Naive thymus-derived CD8-positive, alpha-beta T cell (primary cell): ENCODE measurements at regions of chr13 and their contacts with region 1.

Region 1: DNA sequence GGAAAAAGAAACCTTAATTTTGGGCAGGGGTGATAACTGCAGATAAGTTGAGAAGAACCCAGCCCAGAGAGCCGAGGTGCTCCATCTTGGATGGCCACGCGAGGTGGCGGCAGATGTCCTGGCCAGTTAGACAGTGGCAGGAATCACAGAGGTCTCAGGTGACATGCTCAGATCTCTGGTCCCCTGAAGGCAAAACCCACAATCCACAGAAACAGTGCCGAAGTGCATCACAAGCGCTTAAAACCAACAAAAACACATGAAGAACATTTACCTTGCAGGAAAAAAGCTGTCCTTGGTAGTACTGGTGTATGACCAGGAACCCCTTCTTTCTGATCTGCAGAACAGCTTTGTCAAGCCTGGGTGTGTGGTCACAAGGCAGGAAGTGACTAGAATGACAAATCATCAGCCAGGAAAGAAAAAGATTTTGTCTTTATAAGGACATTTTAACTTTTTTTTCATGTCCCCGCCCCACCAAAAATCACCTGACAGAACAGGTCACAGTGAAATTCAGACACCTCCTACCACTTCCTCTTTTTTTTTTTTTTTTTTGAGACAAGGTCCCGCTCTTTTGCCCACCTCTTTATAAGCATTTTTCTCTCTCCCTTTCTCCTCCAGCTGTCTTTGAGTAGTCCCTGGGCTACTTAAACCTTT is at the start of gene LCP1:
- DNase-seq: peak; percentile 41 to 93 (median 86)
- ATAC-seq: peak; percentile 81
- H3K4me3 Mint-ChIP-seq: peak within 1 kb of the TSS; percentile 75 to 97 (median 95)
- H3K27ac Mint-ChIP-seq: peak within 1 kb of the TSS; percentile 86 to 97 (median 95)
- H3K4me1 Mint-ChIP-seq: peaks cover 35 to 67% (median 57%) of the 10 kb centered on the region in 4 donors
- H3K27me3 Mint-ChIP-seq: no peaks in the 10 kb centered on the region
- polyA plus RNA-seq, gene LCP1: 834 to 1,034 (median 852) TPM

Region 2: GRCh38 chr13:45989607-45990006 is 192.4 kb before region 1 on chr13:
- POLR2A ChIA-PET with region 1: no interaction called
- DNase-seq: no peak
- ATAC-seq: no peak
- H3K4me3 Mint-ChIP-seq: no peak overlapping the region
- H3K27ac Mint-ChIP-seq: peak overlapping the region in 3 of 10 donors; percentile 6 to 48 (median 16)
- H3K4me1 Mint-ChIP-seq: peaks cover 0 to 16% (median 12%) of the 10 kb centered on the region in 4 donors
- H3K27me3 Mint-ChIP-seq: no peaks in the 10 kb centered on the region

Region 3: DNA sequence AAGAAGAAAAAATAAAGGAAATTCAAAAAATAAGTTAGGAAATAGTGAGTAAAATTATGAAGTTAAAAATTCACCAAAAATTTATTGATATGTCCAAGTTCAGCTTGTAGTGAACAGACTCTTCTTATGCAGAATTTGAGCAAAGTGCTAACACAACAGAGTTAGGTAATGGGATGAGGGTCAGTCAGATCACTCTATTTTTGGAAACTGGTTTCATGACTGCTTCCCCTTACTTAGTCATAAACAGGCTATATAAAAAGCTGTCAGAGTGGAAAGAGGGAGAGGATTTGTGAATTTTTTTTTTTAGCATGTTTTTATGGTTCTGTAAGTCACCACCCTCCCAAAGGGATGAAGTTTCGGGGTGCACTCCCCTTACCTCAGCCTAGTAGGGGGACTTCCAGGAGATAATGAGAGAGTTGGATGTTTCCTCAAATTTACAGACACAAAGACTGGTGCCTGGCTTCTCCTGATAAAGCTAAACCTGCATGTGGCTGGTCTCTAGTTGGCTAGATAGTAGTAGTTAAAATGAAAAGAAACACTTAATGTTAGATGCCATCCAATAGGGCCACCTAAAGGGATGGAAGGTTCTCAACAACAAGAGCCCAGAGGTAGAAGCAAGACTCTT is 81.7 kb before region 1 on chr13:
- POLR2A ChIA-PET with region 1: no interaction called
- DNase-seq: no peak
- ATAC-seq: no peak
- H3K4me3 Mint-ChIP-seq: no peak overlapping the region
- H3K27ac Mint-ChIP-seq: peak overlapping the region in 1 of 10 donors; percentile 1
- H3K4me1 Mint-ChIP-seq: peaks cover 0 to 7% (median 0%) of the 10 kb centered on the region in 4 donors
- H3K27me3 Mint-ChIP-seq: peaks cover 2 to 12% (median 9%) of the 10 kb centered on the region in 5 donors

Region 4: DNA sequence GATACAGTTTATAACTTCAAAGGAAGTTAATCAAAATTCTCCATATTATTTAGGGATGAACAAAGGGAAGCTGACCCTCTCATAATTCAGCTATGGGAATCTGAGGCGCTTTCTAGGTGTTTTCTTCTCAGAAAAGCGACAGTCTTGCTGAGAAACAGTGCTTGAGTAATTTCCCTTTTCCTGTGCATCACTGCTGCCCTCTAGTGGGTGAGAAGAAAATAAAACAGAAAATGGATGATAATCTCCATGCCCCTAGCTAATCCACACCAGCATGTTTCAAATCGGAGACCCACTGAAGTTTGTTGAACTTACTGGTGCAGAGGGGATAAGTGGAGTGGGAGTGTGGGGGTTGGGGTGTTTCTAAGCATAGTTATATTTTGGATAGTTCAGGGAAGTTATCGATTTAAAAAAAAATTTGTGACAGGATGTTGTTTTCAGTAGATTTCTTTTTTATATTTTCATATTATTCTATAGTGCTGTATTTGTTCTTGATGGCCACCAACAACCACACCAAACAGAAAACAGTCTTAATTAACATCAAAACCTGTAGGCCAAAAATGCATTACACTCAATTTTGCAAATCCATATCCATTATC is 21.4 kb before region 1 on chr13:
- POLR2A ChIA-PET with region 1: interaction called, 142 read pairs
- DNase-seq: peak in 7 of 10 donors; percentile 34 to 80 (median 49)
- ATAC-seq: peak; percentile 78 to 84
- H3K4me3 Mint-ChIP-seq: peak overlapping the region; percentile 49 to 85 (median 75)
- H3K27ac Mint-ChIP-seq: peak overlapping the region; percentile 81 to 98 (median 92)
- H3K4me1 Mint-ChIP-seq: peaks cover 31 to 57% (median 56%) of the 10 kb centered on the region in 4 donors
- H3K27me3 Mint-ChIP-seq: no peaks in the 10 kb centered on the region

Region 5: DNA sequence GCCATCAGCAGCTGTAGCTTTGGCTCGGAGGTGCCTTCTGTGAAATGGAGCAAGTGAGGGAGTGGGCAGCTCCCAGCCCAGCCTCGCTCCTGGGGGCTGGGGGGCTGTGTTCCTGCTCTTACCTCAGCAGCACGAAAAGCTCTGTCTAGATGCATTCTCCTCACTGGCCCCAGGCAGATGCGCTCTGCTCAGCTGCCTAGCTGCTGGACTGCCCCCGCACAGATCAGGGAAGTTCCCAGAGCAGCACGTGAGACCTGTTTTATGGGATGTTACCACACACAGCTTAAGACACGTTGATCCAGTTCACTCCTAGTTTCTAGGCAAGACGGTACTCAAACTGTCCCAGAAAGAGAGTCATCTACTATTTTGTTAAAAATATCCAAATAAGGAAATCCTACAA is 13.6 kb before region 1 on chr13:
- POLR2A ChIA-PET with region 1: interaction called, 142 read pairs
- DNase-seq: peak in 3 of 10 donors; percentile 27 to 47 (median 41)
- ATAC-seq: peak; percentile 31 to 49
- H3K4me3 Mint-ChIP-seq: peak overlapping the region; percentile 52 to 96 (median 76)
- H3K27ac Mint-ChIP-seq: peak overlapping the region; percentile 89 to 99 (median 96)
- H3K4me1 Mint-ChIP-seq: peaks cover 58 to 97% (median 92%) of the 10 kb centered on the region in 4 donors
- H3K27me3 Mint-ChIP-seq: no peaks in the 10 kb centered on the region